Aorta (tissue), 5 donors: ENCODE measurements at regions of chr1 and their contacts with region 1.

Region 1: DNA sequence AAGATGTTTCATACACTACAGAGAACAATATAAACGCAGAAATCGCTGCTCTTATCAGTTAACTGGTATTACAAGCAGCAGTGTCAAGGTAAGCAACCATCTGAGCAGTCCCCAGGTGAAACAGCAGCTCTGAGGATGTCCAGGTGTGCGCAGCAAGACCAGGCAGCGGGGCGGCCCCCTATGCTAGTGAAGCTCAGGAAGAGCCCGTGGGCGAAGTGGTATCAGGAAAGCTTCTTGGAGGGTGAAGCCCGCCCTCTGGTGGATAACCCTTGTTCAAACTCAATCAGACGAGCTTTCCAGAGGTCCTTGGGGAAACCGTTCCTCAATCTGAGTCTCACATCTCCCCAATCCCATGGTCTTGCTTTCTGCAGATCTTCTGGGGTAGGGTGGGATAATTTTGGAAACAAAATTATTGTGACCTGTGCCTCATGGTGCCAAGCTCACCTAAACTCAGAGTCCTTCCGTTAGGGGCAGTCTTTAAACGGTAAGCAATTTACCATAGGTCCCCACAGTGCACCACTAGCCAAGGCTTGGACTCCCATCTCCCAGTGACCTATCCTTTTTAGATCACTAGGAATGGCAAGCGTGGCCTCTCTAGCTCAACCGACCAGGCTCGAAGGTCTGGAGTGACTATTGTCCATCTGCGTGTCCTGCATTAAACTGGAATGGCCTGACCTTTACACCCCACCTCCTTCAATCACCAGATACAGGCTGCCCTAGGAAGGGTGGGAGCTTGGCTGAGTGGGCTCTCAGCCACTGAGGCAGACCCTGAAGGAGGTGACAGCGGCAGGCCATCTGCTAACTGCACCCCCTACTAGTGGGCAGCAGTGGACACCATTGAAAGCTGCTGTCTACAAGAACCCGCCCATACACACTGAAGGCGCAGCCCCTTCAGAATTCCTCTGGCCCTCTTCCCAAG is 13.6 kb upstream of the FAM110D start:
- DNase-seq: peak; percentile 86 to 88
- ATAC-seq: peak; percentile 80
- H3K4me3 ChIP-seq: no peak overlapping the region
- H3K27ac ChIP-seq: no peak overlapping the region
- H3K4me1 ChIP-seq: no peaks in the 10 kb centered on the region
- H3K27me3 ChIP-seq: no peaks in the 10 kb centered on the region

Region 2: GRCh38 chr1:26102526-26102925 is 42.8 kb before region 1 on chr1:
- intact Hi-C with region 1: loop called (anchors 2 kb)
- DNase-seq: no peak
- ATAC-seq: no peak
- H3K4me3 ChIP-seq: no peak overlapping the region
- H3K27ac ChIP-seq: no peak overlapping the region
- H3K4me1 ChIP-seq: no peaks in the 10 kb centered on the region
- H3K27me3 ChIP-seq: no peaks in the 10 kb centered on the region